ENCODE measurements at regions of chr11 and their contacts with region 1.

Region 1: GRCh38 chr11:110349138-110349996 is 53.0 kb upstream of the RDX start:
- DNase-seq: peak; percentile 91
- H3K4me3 Mint-ChIP-seq: peak overlapping the region; percentile 14
- H3K27ac Mint-ChIP-seq: peak overlapping the region; percentile 97
- H3K4me1 Mint-ChIP-seq: peaks cover 67% of the 10 kb centered on the region
- H3K27me3 Mint-ChIP-seq: no peaks in the 10 kb centered on the region

Region 2: DNA sequence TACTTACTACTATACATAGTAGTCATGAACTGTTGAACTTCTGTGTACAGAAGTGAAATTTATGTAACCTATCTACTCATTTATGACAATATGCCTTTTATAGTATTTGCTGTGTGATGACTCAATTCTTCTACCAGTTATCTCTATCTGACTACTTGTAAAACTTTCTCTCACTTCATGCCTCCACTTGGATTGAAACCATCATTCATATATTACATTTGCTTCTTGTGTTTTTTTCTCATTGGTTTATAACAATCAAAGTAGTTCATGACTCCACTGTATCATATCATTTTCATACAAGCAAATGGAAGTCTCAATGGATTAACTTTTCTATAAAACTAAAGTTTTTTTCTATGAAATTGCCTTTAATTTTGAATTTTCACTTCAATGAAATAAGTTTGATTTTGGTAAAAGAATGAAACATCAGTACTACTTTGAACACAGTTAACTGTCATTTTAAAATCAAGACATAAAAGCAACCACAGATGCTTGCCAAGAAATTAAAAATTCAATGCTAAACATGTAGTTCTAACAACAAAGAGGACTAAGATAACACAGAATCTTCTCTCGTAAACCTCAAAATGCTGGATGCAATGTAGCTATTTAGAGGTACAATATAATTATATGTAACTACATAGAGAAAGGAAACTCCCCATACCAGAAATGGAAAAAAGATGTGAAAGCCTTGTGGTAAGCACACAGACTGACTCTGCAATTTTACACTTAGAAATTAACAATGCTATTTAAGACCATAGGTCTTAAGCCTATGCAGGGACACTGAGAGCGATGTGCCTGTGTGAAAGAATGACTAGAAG is 1728.2 kb before region 1 on chr11:
- CTCF ChIA-PET with region 1: no interaction called
- intact Hi-C with region 1: loop called (anchors 5 kb)
- DNase-seq: no peak
- H3K4me3 Mint-ChIP-seq: no peak overlapping the region
- H3K27ac Mint-ChIP-seq: no peak overlapping the region
- H3K4me1 Mint-ChIP-seq: peaks cover 24% of the 10 kb centered on the region
- H3K27me3 Mint-ChIP-seq: peaks cover 10% of the 10 kb centered on the region

Region 3: GRCh38 chr11:108973402-108974162 is 1375.8 kb before region 1 on chr11:
- CTCF ChIA-PET with region 1: no interaction called
- intact Hi-C with region 1: no loop called
- DNase-seq: no peak
- H3K4me3 Mint-ChIP-seq: no peak overlapping the region
- H3K27ac Mint-ChIP-seq: no peak overlapping the region
- H3K4me1 Mint-ChIP-seq: no peaks in the 10 kb centered on the region
- H3K27me3 Mint-ChIP-seq: no peaks in the 10 kb centered on the region

Region 4: GRCh38 chr11:110032259-110032658 is 317.1 kb before region 1 on chr11:
- CTCF ChIA-PET with region 1: no interaction called
- intact Hi-C with region 1: no loop called
- DNase-seq: no peak
- H3K4me3 Mint-ChIP-seq: no peak overlapping the region
- H3K27ac Mint-ChIP-seq: no peak overlapping the region
- H3K4me1 Mint-ChIP-seq: no peaks in the 10 kb centered on the region
- H3K27me3 Mint-ChIP-seq: no peaks in the 10 kb centered on the region

Region 5: GRCh38 chr11:110311783-110312579 is 37.4 kb before region 1 on chr11:
- CTCF ChIA-PET with region 1: interaction called, 7 read pairs
- intact Hi-C with region 1: loop called (anchors 1 kb)
- DNase-seq: peak; percentile 34
- H3K4me3 Mint-ChIP-seq: no peak overlapping the region
- H3K27ac Mint-ChIP-seq: peak overlapping the region; percentile 83
- H3K4me1 Mint-ChIP-seq: peaks cover 12% of the 10 kb centered on the region
- H3K27me3 Mint-ChIP-seq: no peaks in the 10 kb centered on the region

Region 6: GRCh38 chr11:110337570-110338193 is 11.7 kb before region 1 on chr11:
- CTCF ChIA-PET with region 1: interaction called, 10 read pairs
- intact Hi-C with region 1: loop called (anchors 1 kb)
- DNase-seq: peak; percentile 81
- H3K4me3 Mint-ChIP-seq: no peak overlapping the region
- H3K27ac Mint-ChIP-seq: no peak overlapping the region
- H3K4me1 Mint-ChIP-seq: peaks cover 21% of the 10 kb centered on the region
- H3K27me3 Mint-ChIP-seq: peaks cover 2% of the 10 kb centered on the region

Region 7: DNA sequence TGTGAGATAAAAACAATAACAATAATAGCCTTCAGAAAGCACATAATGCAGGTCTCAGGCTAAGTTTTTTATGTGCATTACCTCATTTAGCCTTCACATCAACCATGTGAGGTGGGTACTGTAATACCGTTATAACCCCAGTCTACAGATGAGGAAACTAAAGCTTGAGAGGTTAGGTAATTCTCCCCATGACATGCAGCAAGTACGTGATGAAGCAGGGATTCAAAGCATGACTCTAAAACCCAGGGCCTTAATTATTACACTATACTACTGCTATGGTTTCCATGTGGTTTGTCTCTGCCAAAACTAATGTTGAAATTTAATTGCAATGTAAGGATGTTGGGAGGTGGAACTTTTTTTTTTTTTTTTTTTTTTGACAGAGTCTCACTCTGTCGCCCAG is 42.7 kb after region 1 on chr11:
- CTCF ChIA-PET with region 1: no interaction called
- intact Hi-C with region 1: no loop called
- DNase-seq: no peak
- H3K4me3 Mint-ChIP-seq: no peak overlapping the region
- H3K27ac Mint-ChIP-seq: no peak overlapping the region
- H3K4me1 Mint-ChIP-seq: no peaks in the 10 kb centered on the region
- H3K27me3 Mint-ChIP-seq: peaks cover 7% of the 10 kb centered on the region

Region 8: DNA sequence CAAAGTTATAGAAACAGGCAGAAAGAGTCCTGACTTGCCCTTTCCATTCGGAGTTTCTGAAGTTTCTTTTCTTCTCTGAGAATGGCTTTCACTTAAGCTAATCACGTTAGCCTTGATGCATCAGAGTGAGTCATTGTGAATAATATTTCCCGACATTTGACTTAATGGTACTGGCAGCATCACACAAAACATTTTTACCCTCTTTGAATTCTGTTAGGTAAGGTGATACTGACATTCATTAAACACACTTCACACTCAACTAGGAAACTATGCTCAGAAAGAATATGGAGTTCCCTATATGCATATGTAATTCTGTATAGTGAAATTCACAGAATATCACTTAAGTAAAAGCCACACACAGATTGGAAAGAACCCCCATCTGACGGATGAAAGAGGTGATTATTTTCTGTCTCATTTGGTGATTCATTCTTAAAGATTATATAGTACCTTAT is 483.7 kb after region 1 on chr11:
- CTCF ChIA-PET with region 1: no interaction called
- intact Hi-C with region 1: loop called (anchors 1 kb)
- DNase-seq: no peak
- H3K4me3 Mint-ChIP-seq: no peak overlapping the region
- H3K27ac Mint-ChIP-seq: peak overlapping the region; percentile 84
- H3K4me1 Mint-ChIP-seq: peaks cover 31% of the 10 kb centered on the region
- H3K27me3 Mint-ChIP-seq: no peaks in the 10 kb centered on the region

Region 9: GRCh38 chr11:111531687-111532364 is 1182.5 kb after region 1 on chr11:
- CTCF ChIA-PET with region 1: no interaction called
- intact Hi-C with region 1: loop called (anchors 1 kb)
- DNase-seq: peak; percentile 88
- H3K4me3 Mint-ChIP-seq: no peak overlapping the region
- H3K27ac Mint-ChIP-seq: peak overlapping the region; percentile 82
- H3K4me1 Mint-ChIP-seq: peaks cover 47% of the 10 kb centered on the region
- H3K27me3 Mint-ChIP-seq: peaks cover 16% of the 10 kb centered on the region